Activated T-helper 2 cell treated with anti-CD3 and anti-CD28 coated beads, Interferon-gamma antibody, Interleukin-2, Interleukin-4, amounts not matched to agents 10 μg/mL and 5 μg/mL and 100 μg/mL, durations not matched to agents 14 hours and 24 hours and 36 hours (primary cell): ENCODE measurements at regions of chr3 and their contacts with region 1.

Region 1: GRCh38 chr3:15332405-15333098 is at the start of gene SH3BP5:
- DNase-seq: peak; percentile 68
- H3K4me3 Mint-ChIP-seq: peak within 1 kb of the TSS; percentile 90
- H3K27ac Mint-ChIP-seq: peak within 1 kb of the TSS; percentile 77
- H3K4me1 Mint-ChIP-seq: peaks cover 45% of the 10 kb centered on the region
- H3K27me3 Mint-ChIP-seq: peaks cover 2% of the 10 kb centered on the region
- total RNA-seq, gene SH3BP5: 14.8 and 15.0 TPM in 2 replicates

Region 2: GRCh38 chr3:15361494-15362212 is 29.1 kb after region 1 on chr3:
- intact Hi-C with region 1: loop called (anchors 1 kb)
- DNase-seq: peak; percentile 36
- H3K4me3 Mint-ChIP-seq: peak overlapping the region; percentile 30
- H3K27ac Mint-ChIP-seq: peak overlapping the region; percentile 81
- H3K4me1 Mint-ChIP-seq: peaks cover 36% of the 10 kb centered on the region
- H3K27me3 Mint-ChIP-seq: no peaks in the 10 kb centered on the region

Region 3: GRCh38 chr3:15399970-15400369 is 67.4 kb after region 1 on chr3:
- intact Hi-C with region 1: no loop called
- DNase-seq: no peak
- H3K4me3 Mint-ChIP-seq: no peak overlapping the region
- H3K27ac Mint-ChIP-seq: no peak overlapping the region
- H3K4me1 Mint-ChIP-seq: peaks cover 22% of the 10 kb centered on the region
- H3K27me3 Mint-ChIP-seq: no peaks in the 10 kb centered on the region